ENCODE measurements at regions of chr15 and their contacts with region 1.

Region 1: DNA sequence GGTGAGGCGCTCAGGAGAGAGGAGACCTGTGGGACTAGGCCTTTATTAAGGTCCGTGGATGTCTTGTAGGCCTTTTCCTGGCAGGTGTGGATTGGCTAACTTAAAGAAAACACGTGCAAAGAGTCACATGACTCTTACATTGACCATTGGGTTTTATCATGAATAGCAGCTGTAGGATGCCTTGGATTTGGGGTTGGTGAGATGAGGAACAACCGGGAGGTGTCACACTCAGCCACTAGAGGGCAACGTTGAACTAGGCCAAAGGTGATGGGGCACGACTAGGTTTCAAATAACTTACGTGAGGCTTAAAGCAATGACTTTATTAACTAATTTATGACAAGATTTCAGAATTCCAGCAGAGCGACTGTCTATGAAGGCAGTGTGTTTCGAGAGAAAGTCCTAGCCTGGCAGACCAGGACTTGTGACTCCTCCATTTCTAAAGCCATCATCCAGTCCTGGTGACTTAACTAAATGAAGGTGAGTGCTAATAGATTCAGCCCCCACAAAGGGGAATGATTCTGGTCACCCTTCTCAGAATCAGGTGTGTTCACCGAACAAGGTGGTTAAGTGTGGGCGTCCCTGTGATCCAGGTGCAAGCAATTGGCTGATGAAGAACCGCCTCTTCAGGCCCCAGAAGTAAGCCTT is 345.6 kb downstream of the MCTP2 start:
- DNase-seq: peak; percentile 9
- CTCF ChIP-seq: peak; percentile 81

Region 2: GRCh38 chr15:95291898-95292472 is 715.0 kb after region 1 on chr15:
- in situ Hi-C with region 1: loop called (anchors 25 kb)
- DNase-seq: peak; percentile 33
- CTCF ChIP-seq: peak; percentile 67